ENCODE measurements at regions of chr14 and their contacts with region 1.

Region 1: DNA sequence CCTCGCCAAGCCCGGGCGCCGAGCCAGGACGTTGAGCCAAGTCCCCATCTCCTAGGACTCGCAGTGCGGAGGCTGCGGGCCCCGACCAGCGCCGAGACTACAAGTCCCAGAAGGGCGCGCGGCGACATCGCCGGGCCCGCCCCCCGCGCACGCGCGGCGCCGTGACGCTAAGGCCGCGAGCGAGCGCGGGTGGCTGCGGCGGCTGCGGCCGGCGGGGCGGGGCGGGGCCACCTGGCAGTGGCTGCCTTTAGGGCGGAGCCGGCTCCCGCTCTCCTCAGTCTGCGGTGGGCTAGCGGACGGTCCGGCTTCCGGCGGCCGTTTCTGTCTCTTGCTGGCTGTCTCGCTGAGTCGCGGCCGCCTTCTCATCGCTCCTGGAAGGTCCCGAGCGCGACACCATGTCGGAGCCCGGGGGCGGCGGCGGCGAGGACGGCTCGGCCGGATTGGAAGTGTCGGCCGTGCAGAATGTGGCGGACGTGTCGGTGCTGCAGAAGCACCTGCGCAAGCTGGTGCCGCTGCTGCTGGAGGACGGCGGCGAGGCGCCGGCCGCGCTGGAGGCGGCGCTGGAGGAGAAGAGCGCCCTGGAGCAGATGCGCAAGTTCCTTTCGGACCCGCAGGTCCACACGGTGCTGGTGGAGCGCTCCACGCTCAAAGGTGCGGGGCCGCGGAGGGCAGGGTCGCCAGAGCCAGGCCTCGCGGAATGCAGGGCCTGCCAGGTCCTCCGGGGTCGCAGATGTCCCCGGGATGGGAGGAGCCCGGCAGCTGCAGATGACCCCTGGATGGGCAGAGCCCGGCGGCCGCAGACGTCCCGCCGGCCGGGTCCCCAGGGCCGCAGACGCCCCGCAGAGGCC is at the start of gene DYNC1H1:
- DNase-seq: peak; percentile 93
- H3K4me3 Mint-ChIP-seq: peak within 1 kb of the TSS; percentile 87
- H3K27ac Mint-ChIP-seq: peak within 1 kb of the TSS; percentile 61
- H3K4me1 Mint-ChIP-seq: peaks cover 47% of the 10 kb centered on the region
- H3K27me3 Mint-ChIP-seq: no peaks in the 10 kb centered on the region
- CTCF ChIP-seq: no peak
- total RNA-seq, gene DYNC1H1: 510 and 529 TPM in 2 replicates

Region 2: GRCh38 chr14:102020058-102020971 is 55.8 kb after region 1 on chr14:
- CTCF ChIA-PET with region 1: no interaction called
- intact Hi-C with region 1: loop called (anchors 10 kb)
- DNase-seq: no peak
- H3K4me3 Mint-ChIP-seq: no peak overlapping the region
- H3K27ac Mint-ChIP-seq: no peak overlapping the region
- H3K4me1 Mint-ChIP-seq: no peaks in the 10 kb centered on the region
- H3K27me3 Mint-ChIP-seq: no peaks in the 10 kb centered on the region
- CTCF ChIP-seq: no peak